Activated CD8-positive, alpha-beta T cell treated with anti-CD3 and anti-CD28 coated beads, Interleukin-2, amount 10 ng/mL, durations not matched to agents 7 days and 5 days (primary cell): ENCODE measurements at regions of chr5 and their contacts with region 1.

Region 1: DNA sequence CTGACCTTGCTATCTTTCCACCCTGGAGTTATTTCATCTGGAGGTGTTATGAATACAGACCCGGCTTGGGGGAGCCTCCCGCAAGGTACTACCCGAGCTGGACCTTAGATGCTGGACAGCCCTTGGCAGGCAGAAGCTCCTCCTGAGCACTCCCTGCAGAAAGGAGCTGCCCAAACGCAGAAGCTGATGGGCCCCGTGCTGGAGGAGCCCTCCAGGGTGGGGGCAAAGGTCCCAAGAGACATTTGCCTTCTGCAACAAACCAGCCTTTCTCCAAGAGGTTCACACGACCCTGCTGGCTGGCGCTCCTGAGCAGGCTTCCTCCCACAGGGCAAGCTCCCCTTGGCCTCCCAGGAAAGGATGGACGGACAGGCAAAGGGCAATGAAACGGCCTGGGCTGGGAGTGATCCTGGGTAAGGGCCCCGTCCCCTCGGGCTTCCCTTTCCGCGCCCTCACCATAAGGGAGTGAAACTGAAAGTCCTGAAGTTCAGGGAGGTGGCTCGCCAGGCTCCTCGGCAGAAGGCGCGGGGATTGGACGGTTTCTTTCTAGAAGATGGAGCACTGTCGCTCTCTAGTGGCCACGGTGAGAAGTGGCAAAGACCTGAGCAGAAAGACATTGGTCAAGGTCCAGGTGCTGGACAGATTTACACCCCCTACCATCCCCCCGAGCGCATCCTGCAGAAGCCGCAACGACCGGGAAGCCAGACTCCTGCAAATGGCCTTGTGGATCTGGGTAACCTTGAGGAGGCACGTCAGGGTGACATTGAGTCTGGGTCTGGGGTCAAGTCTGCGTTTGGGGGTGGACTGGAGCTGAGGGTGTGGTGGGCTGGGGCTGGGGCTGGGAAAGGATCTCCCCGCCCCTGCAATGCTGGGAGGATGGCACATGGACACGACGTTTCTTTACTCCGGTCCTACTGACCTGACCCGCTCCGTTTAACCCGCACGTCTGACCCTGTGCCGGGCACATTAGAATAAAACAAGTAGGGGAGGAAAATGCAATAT is 56.4 kb downstream of the NEURL1B start:
- DNase-seq: peak; percentile 92
- ATAC-seq: peak; percentile 98
- H3K4me3 Mint-ChIP-seq: peak overlapping the region; percentile 89
- H3K27ac Mint-ChIP-seq: peak overlapping the region; percentile 95
- H3K4me1 Mint-ChIP-seq: peaks cover 28% of the 10 kb centered on the region
- H3K27me3 Mint-ChIP-seq: peaks cover 14% of the 10 kb centered on the region

Region 2: DNA sequence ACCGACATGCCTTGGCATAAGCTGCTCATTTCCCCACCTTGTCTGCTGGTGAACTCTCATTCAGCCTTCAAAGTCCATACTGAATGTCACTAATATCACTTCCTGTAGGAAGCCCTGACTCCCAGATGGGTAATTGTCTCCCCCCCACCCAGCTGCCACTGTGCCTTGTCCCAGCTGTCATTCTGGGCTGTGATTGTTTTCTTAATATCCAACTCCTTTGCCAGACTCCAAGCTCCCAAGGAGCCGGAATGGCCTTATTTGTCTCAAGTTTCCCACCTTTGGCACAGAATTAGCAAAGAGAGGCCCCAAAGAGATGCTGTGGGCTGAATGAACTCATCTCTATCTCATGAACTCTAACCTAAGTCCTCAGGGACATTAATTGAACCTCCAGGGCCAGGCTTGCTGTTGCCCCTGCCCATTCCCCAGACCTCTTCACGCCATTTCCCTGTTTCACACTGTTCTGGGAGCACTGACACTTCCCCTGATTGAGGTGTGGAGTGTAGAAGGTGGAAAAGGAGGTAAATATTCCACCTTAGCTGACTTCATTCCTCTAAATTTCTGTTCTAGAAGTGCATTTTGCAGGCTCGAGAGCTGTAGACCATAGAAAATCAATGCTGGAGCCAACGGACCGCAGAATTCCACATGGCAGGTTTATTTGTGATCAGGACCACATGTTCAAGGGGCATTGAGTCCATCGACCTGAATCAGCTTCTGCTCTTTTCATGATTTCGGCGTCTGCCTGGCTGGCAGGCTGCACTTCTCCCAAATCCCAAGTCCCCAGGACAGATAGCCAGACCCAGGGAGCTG is 238.2 kb before region 1 on chr5:
- CTCF ChIA-PET with region 1: interaction called, 25 read pairs
- POLR2A ChIA-PET with region 1: no interaction called
- DNase-seq: no peak
- ATAC-seq: no peak
- H3K4me3 Mint-ChIP-seq: no peak overlapping the region
- H3K27ac Mint-ChIP-seq: no peak overlapping the region
- H3K4me1 Mint-ChIP-seq: peaks cover 20% of the 10 kb centered on the region
- H3K27me3 Mint-ChIP-seq: peaks cover 14% of the 10 kb centered on the region

Region 3: DNA sequence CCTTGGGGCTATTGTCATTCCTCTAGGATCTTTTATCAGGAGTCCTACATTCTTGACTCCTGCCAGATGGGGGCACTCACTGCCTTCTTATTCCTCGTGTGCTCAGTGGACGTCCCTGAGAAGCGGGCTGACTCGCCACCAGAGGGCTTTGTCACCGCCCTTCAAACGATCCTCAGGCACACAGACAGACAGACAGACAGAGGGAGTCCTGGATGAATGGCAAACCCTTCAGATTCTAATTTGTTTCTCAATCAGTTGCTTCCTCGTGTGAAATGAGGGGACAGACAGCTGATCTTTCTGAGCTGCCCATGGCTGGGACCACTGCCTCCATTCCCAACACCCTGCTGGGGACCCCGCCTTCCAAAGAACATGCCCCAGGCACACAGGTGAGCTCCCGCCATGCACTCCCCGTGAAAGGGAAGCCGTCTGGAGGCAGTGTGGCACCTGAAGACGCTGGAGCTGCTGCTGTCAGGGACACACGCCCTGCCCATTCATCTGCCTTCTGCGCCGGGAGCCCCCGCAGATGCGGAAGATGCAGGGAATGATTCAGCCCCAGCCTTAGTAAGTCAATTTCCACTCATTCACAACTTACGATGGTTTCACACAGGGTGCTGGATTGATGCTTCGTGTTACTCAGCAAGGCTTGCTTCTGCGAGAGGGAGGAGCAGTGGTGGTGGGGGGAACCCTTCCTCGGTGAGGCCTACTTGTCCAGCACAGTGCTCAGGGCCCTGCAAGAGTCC is 218.2 kb before region 1 on chr5:
- CTCF ChIA-PET with region 1: interaction called, 31 read pairs
- POLR2A ChIA-PET with region 1: no interaction called
- DNase-seq: peak; percentile 82
- ATAC-seq: peak; percentile 99
- H3K4me3 Mint-ChIP-seq: no peak overlapping the region
- H3K27ac Mint-ChIP-seq: no peak overlapping the region
- H3K4me1 Mint-ChIP-seq: no peaks in the 10 kb centered on the region
- H3K27me3 Mint-ChIP-seq: peaks cover 6% of the 10 kb centered on the region

Region 4: GRCh38 chr5:172683696-172684471 is 13.5 kb before region 1 on chr5:
- CTCF ChIA-PET with region 1: interaction called, 16 read pairs
- POLR2A ChIA-PET with region 1: interaction called, 4 read pairs
- DNase-seq: peak; percentile 41
- ATAC-seq: peak; percentile 59
- H3K4me3 Mint-ChIP-seq: peak overlapping the region; percentile 45
- H3K27ac Mint-ChIP-seq: no peak overlapping the region
- H3K4me1 Mint-ChIP-seq: peaks cover 20% of the 10 kb centered on the region
- H3K27me3 Mint-ChIP-seq: peaks cover 11% of the 10 kb centered on the region

Region 5: DNA sequence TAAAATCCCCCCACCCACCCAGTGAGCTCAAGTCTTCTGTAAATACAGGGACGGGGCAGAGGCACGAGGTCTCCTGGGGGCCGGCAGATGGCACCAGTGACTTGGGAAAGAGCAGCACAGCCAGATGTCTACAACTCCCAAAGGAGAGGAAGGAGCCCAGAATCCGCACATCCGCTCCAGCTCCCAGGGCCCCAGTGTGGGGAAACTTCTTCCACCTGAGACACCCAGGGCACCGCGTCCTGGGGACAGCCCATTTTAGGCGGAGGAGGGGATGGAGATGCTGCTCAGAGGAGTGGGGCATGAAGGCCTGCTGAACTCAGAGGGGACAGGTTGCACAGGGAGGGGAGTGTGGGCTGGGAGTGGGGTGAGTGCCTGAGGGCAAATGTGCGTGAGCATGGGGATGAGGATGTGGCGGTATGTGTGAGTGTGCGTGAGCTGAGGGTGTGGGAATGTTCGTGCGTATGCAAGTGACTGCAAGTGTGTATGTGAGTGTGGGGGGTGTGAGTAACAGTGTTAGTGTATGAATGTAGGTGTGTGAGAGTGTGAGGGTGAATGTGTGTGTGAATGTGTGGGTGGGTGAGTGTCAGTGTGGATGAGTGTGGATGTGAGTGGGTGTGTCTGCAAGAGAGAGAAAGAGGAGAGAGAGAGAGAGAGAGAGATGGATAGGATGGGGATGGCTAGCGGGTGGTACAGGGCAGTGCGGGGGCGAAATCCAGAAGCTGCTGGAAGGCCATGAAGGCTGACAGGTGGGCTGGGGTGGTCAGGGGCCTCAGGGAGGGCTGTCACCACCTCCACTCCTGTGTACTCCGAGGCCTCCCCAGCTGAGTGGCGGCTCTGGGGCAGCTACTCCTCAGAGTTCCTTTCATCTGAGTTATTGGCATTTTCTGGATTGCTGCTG is 10.1 kb after region 1 on chr5:
- CTCF ChIA-PET with region 1: interaction called, 14 read pairs
- POLR2A ChIA-PET with region 1: interaction called, 5 read pairs
- DNase-seq: no peak
- ATAC-seq: no peak
- H3K4me3 Mint-ChIP-seq: no peak overlapping the region
- H3K27ac Mint-ChIP-seq: no peak overlapping the region
- H3K4me1 Mint-ChIP-seq: no peaks in the 10 kb centered on the region
- H3K27me3 Mint-ChIP-seq: peaks cover 34% of the 10 kb centered on the region